Naive thymus-derived CD4-positive, alpha-beta T cell (primary cell): ENCODE measurements at regions of chr20 and their contacts with region 1.

Region 1: DNA sequence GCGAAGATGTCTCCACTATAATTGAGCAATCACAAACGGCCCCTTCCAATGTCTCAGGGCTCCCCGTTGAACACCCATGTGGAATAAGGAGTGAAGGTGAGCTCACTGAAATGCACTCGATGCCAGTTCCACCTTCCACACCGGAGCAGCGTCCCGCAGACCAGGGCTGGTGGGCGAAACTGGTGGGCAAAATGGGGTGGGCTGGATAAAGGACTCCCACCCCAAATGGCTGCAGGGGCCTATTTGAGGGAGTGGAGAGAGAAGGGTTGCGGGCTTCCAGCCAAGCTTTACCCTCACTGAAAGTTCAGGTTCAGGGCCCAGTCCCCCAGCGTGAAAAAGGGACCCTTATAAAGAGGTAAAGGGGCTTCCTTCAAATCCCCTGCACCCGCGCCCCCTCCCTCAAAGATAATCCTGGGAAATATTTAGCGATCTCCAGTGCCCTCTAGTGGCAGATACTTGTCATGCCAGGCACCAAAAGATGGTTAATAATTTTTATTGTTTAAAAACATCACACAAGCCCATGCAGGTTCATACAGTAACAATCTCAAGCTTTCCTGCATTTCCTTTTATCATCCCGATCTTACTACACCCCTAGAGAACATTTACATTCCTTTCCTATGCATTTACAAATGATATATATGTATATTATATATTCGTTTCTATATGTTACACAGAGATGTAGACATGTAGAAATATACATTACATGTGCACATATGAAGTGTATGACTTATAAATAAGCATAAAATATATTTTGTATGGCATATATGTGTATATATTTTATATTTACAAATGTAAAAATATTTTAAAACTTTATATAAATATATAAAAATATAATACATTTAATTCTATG is 58.2 kb upstream of the NKX2-2 start:
- DNase-seq: peak in 4 of 9 donors; percentile 18 to 34 (median 29)
- ATAC-seq: peak; percentile 46
- H3K4me3 ChIP-seq: no peak overlapping the region
- H3K4me3 Mint-ChIP-seq: no peak overlapping the region
- H3K27ac ChIP-seq: no peak overlapping the region
- H3K27ac Mint-ChIP-seq: no peak overlapping the region
- H3K4me1 ChIP-seq: peaks cover 0 to 11% of the 10 kb centered on the region in 2 donors
- H3K4me1 Mint-ChIP-seq: peaks cover 0 to 12% (median 6%) of the 10 kb centered on the region in 7 donors
- H3K27me3 ChIP-seq: no peaks in the 10 kb centered on the region
- H3K27me3 Mint-ChIP-seq: peaks cover 16 to 37% (median 29%) of the 10 kb centered on the region in 5 donors

Region 2: DNA sequence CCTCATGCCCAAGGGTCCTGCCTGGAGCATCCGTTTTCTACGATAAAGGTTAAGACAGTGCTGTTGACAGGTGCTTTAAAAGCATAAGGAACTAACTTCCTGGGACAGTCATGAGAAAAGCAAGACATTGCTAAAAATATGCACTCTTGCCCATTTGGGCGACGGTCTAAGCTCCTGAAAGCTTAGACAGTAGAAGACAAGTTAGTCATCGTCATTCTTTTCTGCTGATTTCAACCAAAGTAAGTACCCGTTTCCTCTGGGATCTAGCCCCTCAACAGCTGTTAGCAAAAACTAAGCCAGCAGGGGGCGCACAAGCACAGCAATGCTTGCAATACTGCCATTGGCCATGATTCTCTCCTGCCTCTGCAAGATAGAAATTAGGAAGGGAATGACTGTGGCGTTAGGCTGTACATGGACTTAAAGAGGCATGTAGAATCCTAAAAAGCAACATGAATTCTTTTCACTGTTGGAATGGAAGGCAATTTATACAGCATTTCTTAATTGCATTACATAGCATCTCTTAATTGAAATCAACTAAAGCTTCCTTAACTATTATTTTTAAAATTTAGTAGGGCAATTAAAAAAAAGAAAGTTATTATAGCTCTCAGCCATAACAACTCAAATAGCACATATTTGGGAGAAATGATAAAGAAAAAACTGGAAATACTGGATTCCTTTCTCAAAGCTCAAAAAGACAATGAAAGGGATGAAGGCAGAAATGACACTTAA is 711.8 kb before region 1 on chr20:
- CTCF ChIA-PET with region 1: no interaction called
- POLR2A ChIA-PET with region 1: no interaction called
- intact Hi-C with region 1: loop called in 1 of 2 experiments (anchors 1 kb)
- DNase-seq: peak; percentile 44 to 80 (median 64)
- ATAC-seq: peak; percentile 81
- H3K4me3 ChIP-seq: no peak overlapping the region
- H3K4me3 Mint-ChIP-seq: no peak overlapping the region
- H3K27ac ChIP-seq: no peak overlapping the region
- H3K27ac Mint-ChIP-seq: no peak overlapping the region
- H3K4me1 ChIP-seq: no peaks in the 10 kb centered on the region
- H3K4me1 Mint-ChIP-seq: peaks cover 0 to 1% (median 0%) of the 10 kb centered on the region in 7 donors
- H3K27me3 ChIP-seq: no peaks in the 10 kb centered on the region
- H3K27me3 Mint-ChIP-seq: peaks cover 13 to 38% (median 31%) of the 10 kb centered on the region in 5 donors

Region 3: GRCh38 chr20:21529863-21530262 is 42.2 kb before region 1 on chr20:
- CTCF ChIA-PET with region 1: interaction called, 58 read pairs
- POLR2A ChIA-PET with region 1: interaction called, 7 read pairs
- intact Hi-C with region 1: loop called (anchors 1 kb)
- DNase-seq: no peak
- ATAC-seq: no peak
- H3K4me3 ChIP-seq: no peak overlapping the region
- H3K4me3 Mint-ChIP-seq: no peak overlapping the region
- H3K27ac ChIP-seq: no peak overlapping the region
- H3K27ac Mint-ChIP-seq: peak overlapping the region in 1 of 9 donors; percentile 3
- H3K4me1 ChIP-seq: no peaks in the 10 kb centered on the region
- H3K4me1 Mint-ChIP-seq: peaks cover 0 to 5% (median 4%) of the 10 kb centered on the region in 7 donors
- H3K27me3 ChIP-seq: no peaks in the 10 kb centered on the region
- H3K27me3 Mint-ChIP-seq: peaks cover 33 to 76% (median 39%) of the 10 kb centered on the region in 5 donors

Region 4: DNA sequence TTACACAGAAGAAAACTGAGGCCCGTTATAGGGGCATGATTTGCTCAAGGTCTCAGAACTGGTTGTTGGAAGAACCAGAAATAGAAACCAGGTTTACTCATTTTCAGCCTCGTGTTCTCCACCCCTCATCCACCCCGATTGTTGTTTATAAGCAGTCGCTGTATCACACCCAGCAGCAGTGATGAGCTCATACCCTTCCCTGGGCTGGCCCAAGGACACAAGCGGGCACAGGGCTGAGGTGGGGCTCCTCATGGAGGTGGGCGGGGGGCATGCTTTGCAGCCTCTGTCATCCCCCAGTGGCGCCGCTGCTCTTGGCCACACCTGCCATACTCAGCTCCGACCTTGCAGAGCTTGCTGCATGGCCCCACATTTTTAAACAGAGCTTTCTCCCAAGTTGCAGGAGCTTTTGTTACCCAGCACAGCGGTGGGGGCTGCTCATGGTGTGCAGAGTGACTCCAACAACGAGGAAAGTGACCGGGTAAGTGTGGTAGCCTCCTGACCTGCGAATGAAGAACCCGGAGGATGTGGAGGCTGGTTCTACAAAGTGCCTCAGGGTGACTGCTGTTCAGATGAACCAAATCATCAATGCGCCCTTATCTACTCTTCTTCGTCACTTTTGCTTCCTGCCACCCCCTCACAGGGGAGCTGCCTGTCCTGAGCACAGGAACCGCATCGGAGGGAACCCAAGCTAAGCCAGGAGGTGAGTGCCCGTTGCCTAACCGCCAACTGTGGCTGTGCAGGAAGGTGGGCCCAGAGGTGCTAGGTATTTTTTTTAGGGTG is 14.6 kb before region 1 on chr20:
- CTCF ChIA-PET with region 1: interaction called, 14 read pairs
- POLR2A ChIA-PET with region 1: interaction called, 5 read pairs
- intact Hi-C with region 1: no loop called
- DNase-seq: peak in 3 of 9 donors; percentile 9 to 19 (median 18)
- ATAC-seq: peak; percentile 64
- H3K4me3 ChIP-seq: peak overlapping the region; percentile 27
- H3K4me3 Mint-ChIP-seq: peak overlapping the region; percentile 46 to 75 (median 59)
- H3K27ac ChIP-seq: peak overlapping the region; percentile 7
- H3K27ac Mint-ChIP-seq: peak overlapping the region; percentile 26 to 78 (median 57)
- H3K4me1 ChIP-seq: peaks cover 12 to 27% of the 10 kb centered on the region in 2 donors
- H3K4me1 Mint-ChIP-seq: peaks cover 8 to 39% (median 30%) of the 10 kb centered on the region in 7 donors
- H3K27me3 ChIP-seq: no peaks in the 10 kb centered on the region
- H3K27me3 Mint-ChIP-seq: peaks cover 0 to 10% (median 0%) of the 10 kb centered on the region in 5 donors